Heart left ventricle (tissue), 16 donors: ENCODE measurements at regions of chr5 and their contacts with region 1.

Region 1: GRCh38 chr5:8550921-8551320 is 682.0 kb downstream of the MTRR start:
- DNase-seq: no peak
- ATAC-seq: no peak
- H3K4me3 ChIP-seq: no peak overlapping the region
- H3K27ac ChIP-seq: no peak overlapping the region
- H3K4me1 ChIP-seq: no peaks in the 10 kb centered on the region
- H3K27me3 ChIP-seq: no peaks in the 10 kb centered on the region
- CTCF ChIP-seq: no peak
- POLR2A ChIP-seq: no peak

Region 2: GRCh38 chr5:8013948-8014710 is 536.8 kb before region 1 on chr5:
- intact Hi-C with region 1: loop called in 1 of 10 experiments (anchors 5 kb)
- DNase-seq: no peak
- ATAC-seq: no peak
- H3K4me3 ChIP-seq: no peak overlapping the region
- H3K27ac ChIP-seq: no peak overlapping the region
- H3K4me1 ChIP-seq: no peaks in the 10 kb centered on the region
- H3K27me3 ChIP-seq: no peaks in the 10 kb centered on the region
- CTCF ChIP-seq: no peak
- POLR2A ChIP-seq: no peak